ENCODE measurements at regions of chr1 and their contacts with region 1.

Region 1: DNA sequence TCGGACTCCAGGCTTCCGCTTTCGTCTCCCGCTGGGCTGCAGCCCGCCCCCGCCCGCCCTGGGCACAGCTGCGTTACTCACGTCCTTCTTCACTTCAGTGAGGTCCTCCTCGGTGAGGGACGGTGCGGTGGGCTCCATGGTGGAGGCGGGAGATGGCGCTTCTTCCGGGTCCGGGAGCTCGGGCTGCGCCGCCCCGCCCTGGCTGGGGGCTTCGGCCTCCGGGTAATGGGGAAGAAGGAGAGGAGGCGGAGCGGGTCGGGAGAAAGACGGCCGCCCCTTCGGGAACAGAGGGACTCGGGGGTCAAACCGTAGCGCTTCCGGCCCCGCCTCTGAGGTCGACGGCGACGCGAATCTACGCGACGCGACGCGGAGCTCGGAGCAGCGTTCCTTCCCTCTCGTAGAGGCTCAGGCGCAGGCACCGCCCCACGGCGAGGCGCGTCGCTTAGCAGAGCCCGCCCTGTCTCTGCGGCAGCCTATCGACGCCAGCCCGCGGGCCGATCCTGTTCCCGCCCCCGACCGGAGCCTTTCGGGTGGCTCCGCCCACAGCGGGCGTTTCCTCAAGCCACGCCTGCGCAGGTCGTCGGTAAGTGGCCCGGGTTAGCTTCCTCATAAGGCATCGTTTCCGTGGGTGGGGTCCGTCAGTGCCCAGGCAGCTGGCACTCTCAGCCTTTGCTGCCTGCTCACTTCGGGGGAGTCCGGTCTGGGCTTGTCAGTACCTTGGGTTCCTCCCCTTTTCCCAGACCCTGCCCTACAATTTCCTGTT is at the start of gene BCL10:
- DNase-seq: peak; percentile 100
- total RNA-seq, gene BCL10: 8.7 TPM

Region 2: DNA sequence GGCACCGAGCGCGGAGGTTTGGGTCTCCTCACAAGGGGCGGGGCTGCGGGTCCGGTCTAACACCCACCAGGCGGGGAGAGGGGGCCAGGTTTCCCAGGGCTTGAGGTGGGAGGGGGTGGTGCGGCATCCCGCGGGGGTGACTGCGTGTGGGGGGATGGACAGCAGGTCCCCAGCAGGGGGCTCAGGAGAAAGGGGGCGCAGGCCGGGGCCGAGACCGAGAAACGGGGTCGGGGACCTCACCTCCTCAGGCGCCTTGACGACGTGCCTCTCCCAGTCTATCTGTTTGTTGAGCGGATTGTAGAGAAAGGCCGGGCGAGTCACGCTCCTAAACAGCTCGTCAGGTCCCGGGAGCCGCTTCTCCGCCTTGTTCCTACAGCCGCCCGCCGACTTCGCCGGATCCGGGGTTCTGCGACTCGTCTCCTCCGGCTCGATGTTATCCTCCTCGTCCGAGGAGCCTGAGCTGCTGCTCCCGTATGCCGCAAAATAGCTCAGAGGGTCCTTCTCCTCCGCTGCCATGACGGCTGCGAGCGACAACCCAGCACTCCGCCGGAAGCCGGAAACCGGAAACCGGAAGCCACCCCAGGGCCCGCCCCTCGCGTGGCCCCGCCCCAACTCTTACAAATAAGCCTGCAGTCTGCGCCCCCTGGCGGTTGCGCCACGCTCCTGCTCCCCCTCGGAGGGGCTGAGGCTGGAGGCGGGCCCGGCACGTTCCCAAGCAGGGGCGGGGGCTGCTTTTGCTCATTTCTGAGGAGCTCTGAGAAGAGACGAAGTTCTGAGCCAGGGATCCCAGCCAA is 17.1 kb before region 1 on chr1 and contains the start of gene C1orf52:
- intact Hi-C with region 1: loop called (anchors 2 kb)
- DNase-seq: peak; percentile 97
- total RNA-seq, gene C1orf52: 17.4 TPM